Activated CD8-positive, alpha-beta T cell treated with anti-CD3 and anti-CD28 coated beads, Interleukin-2, amount 10 ng/mL, durations not matched to agents 7 days and 5 days (primary cell): ENCODE measurements at regions of chr2 and their contacts with region 1.

Region 1: GRCh38 chr2:213157242-213157641 is 5.8 kb upstream of the IKZF2 start:
- DNase-seq: no peak
- ATAC-seq: peak; percentile 25
- H3K4me3 Mint-ChIP-seq: no peak overlapping the region
- H3K27ac Mint-ChIP-seq: no peak overlapping the region
- H3K4me1 Mint-ChIP-seq: peaks cover 17% of the 10 kb centered on the region
- H3K27me3 Mint-ChIP-seq: peaks cover 5% of the 10 kb centered on the region

Region 2: GRCh38 chr2:212777020-212777491 is 380.2 kb before region 1 on chr2:
- CTCF ChIA-PET with region 1: interaction called, 30 read pairs
- POLR2A ChIA-PET with region 1: no interaction called
- DNase-seq: peak; percentile 20
- ATAC-seq: no peak
- H3K4me3 Mint-ChIP-seq: no peak overlapping the region
- H3K27ac Mint-ChIP-seq: no peak overlapping the region
- H3K4me1 Mint-ChIP-seq: peaks cover 10% of the 10 kb centered on the region
- H3K27me3 Mint-ChIP-seq: no peaks in the 10 kb centered on the region

Region 3: GRCh38 chr2:213199864-213200263 is 42.6 kb after region 1 on chr2:
- CTCF ChIA-PET with region 1: no interaction called
- POLR2A ChIA-PET with region 1: no interaction called
- DNase-seq: no peak
- ATAC-seq: no peak
- H3K4me3 Mint-ChIP-seq: no peak overlapping the region
- H3K27ac Mint-ChIP-seq: no peak overlapping the region
- H3K4me1 Mint-ChIP-seq: no peaks in the 10 kb centered on the region
- H3K27me3 Mint-ChIP-seq: no peaks in the 10 kb centered on the region